GM13976 (cell line): ENCODE measurements at regions of chr1 and their contacts with region 1.

Region 1: GRCh38 chr1:62746085-62746808 is 37.7 kb upstream of the ATG4C start:
- DNase-seq: peak; percentile 56
- CTCF ChIP-seq: peak; percentile 16

Region 2: DNA sequence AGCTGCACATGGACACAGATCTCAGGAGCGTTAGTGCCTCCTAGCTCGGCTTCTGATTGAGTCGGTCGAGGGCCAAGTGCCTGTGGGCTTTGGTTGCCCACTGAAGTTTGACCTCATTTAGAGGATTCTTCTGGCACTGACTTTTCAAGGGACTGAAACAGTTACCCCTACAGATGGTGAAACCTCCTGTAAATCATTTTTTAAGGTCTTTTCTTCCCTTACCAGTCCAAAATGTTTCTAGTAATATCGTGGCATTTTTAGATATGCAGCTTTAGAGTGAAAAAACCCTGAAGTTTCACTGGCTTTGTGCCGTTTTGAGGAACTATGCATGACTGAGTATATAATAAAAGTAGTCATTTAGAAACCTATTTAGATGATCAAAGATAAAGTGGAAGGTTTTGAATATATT is 586.3 kb before region 1 on chr1:
- in situ Hi-C with region 1: loop called (anchors 25 kb)
- DNase-seq: no peak
- CTCF ChIP-seq: no peak

Region 3: DNA sequence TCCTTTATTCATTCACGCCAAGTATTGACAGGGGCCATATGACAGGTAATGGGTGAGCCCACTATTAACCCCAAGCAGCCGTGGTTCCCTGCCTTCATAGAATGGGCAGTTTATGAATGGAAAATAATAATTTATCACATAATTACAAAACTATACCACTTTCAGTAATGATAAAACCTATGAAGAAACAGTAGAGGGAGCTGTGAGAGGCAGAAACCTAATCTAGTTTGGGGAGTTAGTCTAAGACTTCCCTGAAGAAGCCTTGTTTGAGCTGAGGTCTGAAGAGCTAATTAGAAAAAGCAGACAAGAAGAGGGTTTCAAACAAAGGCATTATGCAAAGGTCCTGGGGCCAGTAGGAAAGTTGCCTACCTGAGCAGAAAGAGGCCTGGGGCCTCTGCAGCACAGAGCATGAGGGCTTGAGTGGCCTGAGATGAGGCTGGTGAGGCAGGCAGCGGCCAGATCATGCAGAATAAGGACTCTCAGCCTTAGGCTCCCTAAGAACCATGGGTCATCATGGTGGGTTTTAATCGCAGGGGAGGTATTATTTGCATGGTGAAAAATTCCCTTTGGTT is 180.5 kb after region 1 on chr1:
- in situ Hi-C with region 1: no loop called
- DNase-seq: no peak
- CTCF ChIP-seq: no peak